Right ventricle myocardium inferior (tissue), 1 donor: ENCODE measurements at regions of chr13 and their contacts with region 1.

Region 1: DNA sequence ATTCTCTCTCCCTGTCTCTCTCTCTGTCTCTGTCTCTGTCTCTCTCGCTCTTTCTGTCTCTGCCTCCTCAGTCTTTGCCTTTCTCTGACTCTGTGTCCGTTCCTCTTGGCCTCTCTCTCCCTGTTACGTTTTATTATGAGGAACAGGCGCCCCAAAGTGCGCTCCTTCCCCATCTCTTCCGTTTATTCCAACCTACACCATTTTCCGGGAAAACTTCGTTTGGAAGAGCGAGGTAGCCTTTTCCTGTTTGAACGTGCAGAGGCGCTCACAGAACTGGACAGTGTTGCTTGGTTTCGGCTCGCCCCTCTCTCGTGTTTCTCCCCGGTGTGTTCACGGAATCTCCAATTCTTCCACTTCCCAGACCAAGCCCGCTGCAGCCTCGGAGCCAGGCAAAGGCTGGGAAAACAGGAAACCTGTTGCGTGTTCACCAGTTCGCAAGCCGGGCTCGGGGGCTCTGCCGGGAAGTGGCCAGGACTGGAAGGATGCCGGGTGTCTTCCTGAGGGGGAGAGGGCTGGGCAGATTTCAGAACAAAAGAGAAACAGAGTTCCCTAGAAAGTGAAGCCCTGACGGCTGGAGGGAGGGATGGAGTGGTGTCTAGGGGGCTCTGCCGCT is 605 bp downstream of the TMEM255B start:
- DNase-seq: peak; percentile 59
- ATAC-seq: peak; percentile 22

Region 2: DNA sequence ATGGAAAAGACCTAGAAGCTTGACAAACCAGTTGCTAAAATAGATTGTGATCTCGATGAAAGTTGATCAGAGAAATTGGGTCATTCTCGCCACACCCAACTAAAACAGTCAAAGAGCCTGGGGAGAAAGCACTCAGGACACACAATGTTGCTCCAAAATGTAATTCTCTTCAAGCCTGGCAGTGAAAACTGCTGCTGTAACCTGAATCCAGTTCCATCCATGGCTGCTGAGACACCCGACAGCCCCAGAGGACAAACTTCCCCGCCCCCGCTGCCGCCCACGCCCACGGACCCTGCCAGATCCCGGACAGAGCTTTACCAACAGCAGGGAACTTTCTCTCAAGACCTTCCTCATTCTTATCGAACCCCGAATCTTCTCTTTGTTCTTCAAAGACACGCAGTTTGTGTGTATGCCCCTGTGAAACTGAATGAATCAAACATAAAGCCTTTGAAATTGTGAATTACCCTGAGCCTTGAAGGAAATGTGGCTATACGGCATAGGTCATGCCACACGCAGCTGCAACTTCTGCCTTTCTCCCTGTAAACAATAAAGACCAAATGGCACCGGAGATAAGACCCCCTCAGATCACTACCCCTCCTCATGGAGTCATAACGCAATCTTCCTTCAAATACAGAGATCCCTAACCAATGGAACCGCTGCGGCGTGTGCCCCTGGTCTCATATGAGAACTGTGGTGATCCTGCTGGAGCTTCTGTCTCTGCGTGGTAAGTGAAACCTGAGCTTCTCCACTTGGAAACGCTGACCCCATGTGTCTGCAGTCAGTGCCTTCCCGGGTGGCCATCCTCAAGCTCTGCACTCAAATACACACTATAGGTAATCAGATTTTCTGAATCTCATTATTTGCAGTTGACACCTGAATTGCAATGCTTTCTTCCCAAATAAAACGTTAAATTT is 467.4 kb before region 1 on chr13:
- intact Hi-C with region 1: no loop called
- DNase-seq: no peak
- ATAC-seq: no peak

Region 3: GRCh38 chr13:113802145-113802531 is 42.5 kb after region 1 on chr13:
- intact Hi-C with region 1: loop called (anchors 5 kb)
- DNase-seq: peak; percentile 79
- ATAC-seq: peak; percentile 69